ENCODE measurements at regions of chr17 and their contacts with region 1.

Region 1: GRCh38 chr17:75271233-75271954 is 363 bp upstream of the MIF4GD start:
- DNase-seq: peak; percentile 67 to 93
- H3K4me3 ChIP-seq: peak overlapping the region; percentile 97
- H3K4me3 Mint-ChIP-seq: peak overlapping the region; percentile 71
- H3K27ac Mint-ChIP-seq: peak overlapping the region; percentile 1
- H3K4me1 ChIP-seq: peaks cover 14% of the 10 kb centered on the region; the same call in 1 of the 2 replicates
- H3K4me1 Mint-ChIP-seq: peaks cover 15% of the 10 kb centered on the region
- H3K27me3 ChIP-seq: no peaks in the 10 kb centered on the region
- H3K27me3 Mint-ChIP-seq: no peaks in the 10 kb centered on the region
- CTCF ChIP-seq: peak; percentile 41 to 91

Region 2: DNA sequence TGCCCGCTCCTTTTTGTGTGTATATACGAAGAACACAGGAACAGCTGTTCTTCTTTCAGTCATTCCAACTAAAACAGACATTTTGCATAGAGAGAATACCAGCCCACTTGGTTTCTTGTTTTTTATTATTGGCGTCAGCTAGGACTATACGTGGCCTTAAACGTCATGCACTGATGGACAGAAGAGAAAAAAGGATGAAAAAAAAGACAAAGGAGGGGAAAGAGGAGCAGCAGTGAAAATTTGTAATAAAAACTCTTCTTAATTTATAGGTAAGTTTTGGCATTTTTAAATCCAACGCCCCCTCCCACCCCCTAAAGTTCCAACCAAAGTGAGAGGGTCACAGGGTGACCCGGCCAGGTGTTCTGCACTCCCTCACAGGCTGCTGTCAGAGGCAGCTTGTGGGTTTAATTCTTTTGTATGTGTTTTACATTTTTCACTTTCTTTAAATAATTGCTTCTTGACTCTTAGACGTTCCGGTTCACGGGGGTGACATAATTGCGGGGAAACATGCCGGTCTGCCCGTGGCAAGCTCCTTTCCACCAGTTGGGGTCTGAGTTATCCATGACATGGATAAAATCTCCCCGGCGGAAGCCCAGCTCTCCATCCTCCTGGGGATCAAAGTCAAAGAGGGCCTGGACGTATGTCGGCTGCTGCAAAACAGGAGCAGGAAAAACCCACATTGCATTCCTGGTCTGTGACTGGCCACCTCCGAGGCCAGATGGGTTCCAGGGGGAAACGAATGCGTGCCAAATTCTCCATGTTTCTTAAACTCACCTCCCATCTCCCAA is 48.7 kb after region 1 on chr17:
- CTCF ChIA-PET with region 1: interaction called, 11 read pairs
- POLR2A ChIA-PET with region 1: no interaction called
- intact Hi-C with region 1: no loop called
- DNase-seq: no peak
- H3K4me3 ChIP-seq: no peak overlapping the region
- H3K4me3 Mint-ChIP-seq: no peak overlapping the region
- H3K27ac Mint-ChIP-seq: no peak overlapping the region
- H3K4me1 ChIP-seq: no peaks in the 10 kb centered on the region
- H3K4me1 Mint-ChIP-seq: no peaks in the 10 kb centered on the region
- H3K27me3 ChIP-seq: no peaks in the 10 kb centered on the region
- H3K27me3 Mint-ChIP-seq: no peaks in the 10 kb centered on the region
- CTCF ChIP-seq: no peak

Region 3: DNA sequence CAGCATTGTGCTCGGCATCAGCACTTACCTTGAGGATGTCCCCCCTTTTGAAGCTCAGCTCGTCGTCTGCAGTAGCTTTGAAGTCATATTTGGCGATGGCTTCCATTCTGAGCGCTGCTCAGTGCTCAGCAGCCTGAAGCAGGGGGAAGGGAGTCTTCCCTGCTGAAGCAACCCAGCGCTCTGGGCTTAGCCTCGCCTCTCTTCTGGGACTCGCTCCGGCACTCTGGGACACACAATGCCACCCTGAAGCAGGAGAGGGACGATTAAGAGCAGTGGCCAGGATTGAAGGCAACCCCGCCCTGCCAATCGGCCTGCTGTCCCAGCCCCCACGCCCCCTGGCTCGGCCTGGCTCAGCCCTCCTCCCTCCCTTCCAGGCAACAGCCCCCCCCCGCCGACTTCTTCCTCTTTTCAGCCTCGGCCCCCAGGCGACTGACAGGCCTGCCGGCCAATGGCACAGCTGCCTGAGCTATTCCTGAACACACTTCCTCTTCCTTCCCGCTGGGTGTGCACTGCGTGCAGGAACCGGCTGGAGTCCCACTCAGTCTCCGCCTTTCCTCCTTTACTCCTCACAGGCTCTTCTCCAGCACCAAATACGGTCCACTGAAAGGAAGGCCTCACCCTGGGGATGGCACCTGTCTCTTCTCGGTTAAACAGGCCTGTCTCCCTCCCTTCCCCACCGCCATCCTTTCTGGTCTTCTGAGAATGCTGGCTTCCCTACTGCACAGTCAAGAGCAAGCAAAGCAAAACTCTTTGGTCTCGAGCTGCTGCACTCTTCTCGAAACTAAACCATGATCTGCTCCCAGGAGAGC is 122.3 kb after region 1 on chr17:
- CTCF ChIA-PET with region 1: interaction called, 24 read pairs
- POLR2A ChIA-PET with region 1: interaction called, 22 read pairs
- intact Hi-C with region 1: no loop called
- DNase-seq: peak; percentile 99
- H3K4me3 ChIP-seq: peak overlapping the region; percentile 67
- H3K4me3 Mint-ChIP-seq: peak overlapping the region; percentile 91
- H3K27ac Mint-ChIP-seq: peak overlapping the region; percentile 63
- H3K4me1 ChIP-seq: peaks cover 37% of the 10 kb centered on the region
- H3K4me1 Mint-ChIP-seq: peaks cover 22% of the 10 kb centered on the region
- H3K27me3 ChIP-seq: no peaks in the 10 kb centered on the region
- H3K27me3 Mint-ChIP-seq: no peaks in the 10 kb centered on the region
- CTCF ChIP-seq: peak; percentile 5 to 36

Region 4: DNA sequence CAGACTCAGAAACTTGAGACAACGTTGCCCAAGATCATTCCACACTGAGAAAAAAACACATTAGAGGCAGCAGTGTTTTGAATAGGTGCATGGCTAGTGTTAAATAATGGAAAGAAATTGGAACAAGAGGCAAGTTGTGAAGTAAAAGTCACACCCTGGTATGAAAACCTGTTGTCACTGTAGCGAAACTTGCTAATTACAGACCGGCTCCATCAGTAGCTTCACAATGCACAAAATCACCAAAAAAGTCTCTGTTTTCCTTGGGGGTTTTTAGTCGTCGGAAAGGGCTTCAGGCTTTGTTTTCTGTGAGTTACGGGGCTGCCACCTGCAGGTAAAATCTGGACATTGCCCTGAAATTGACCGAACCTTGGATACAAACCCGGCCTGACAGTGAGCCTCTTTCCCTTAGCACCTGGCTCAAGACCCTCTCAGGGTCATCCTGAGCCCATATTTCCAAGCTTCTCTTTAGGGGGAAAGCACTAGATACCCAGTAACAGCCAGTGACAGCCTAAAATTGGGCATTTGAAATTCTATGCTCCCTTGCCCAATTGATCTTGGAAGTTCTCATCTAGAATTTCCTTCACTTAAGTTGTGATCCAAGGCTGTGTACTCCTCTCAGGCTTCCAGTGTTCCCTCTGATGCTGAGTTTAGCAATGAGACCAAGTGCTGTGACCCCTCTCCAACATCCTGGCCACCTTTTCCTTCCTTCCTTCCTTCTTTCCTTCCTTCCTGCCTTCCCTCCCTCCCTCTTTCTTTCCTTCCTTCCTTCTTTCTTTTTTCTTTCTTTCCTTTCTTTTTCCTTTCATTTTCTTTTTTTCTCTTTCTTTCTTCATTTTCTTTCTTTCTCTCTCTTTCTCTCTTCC is 141.3 kb after region 1 on chr17:
- CTCF ChIA-PET with region 1: interaction called, 11 read pairs
- POLR2A ChIA-PET with region 1: interaction called, 4 read pairs
- intact Hi-C with region 1: loop called (anchors 1 kb)
- DNase-seq: peak; percentile 69 to 79
- H3K4me3 ChIP-seq: peak overlapping the region; percentile 11; the same call in 1 of the 2 replicates
- H3K4me3 Mint-ChIP-seq: peak overlapping the region; percentile 27
- H3K27ac Mint-ChIP-seq: no peak overlapping the region
- H3K4me1 ChIP-seq: peaks cover 6% of the 10 kb centered on the region
- H3K4me1 Mint-ChIP-seq: no peaks in the 10 kb centered on the region
- H3K27me3 ChIP-seq: no peaks in the 10 kb centered on the region
- H3K27me3 Mint-ChIP-seq: peaks cover 2% of the 10 kb centered on the region
- CTCF ChIP-seq: peak; percentile 80 to 90

Region 5: GRCh38 chr17:75442168-75443103 is 171.0 kb after region 1 on chr17:
- CTCF ChIA-PET with region 1: no interaction called
- POLR2A ChIA-PET with region 1: no interaction called
- intact Hi-C with region 1: no loop called
- DNase-seq: peak; percentile 51 to 54
- H3K4me3 ChIP-seq: no peak overlapping the region
- H3K4me3 Mint-ChIP-seq: no peak overlapping the region
- H3K27ac Mint-ChIP-seq: peak overlapping the region; percentile 71
- H3K4me1 ChIP-seq: peaks cover 18% of the 10 kb centered on the region
- H3K4me1 Mint-ChIP-seq: peaks cover 7% of the 10 kb centered on the region
- H3K27me3 ChIP-seq: no peaks in the 10 kb centered on the region
- H3K27me3 Mint-ChIP-seq: no peaks in the 10 kb centered on the region
- CTCF ChIP-seq: no peak

Measured in Caco-2 (cell line).